Tibial artery (tissue), 4 donors: ENCODE measurements at regions of chr5 and their contacts with region 1.

Region 1: DNA sequence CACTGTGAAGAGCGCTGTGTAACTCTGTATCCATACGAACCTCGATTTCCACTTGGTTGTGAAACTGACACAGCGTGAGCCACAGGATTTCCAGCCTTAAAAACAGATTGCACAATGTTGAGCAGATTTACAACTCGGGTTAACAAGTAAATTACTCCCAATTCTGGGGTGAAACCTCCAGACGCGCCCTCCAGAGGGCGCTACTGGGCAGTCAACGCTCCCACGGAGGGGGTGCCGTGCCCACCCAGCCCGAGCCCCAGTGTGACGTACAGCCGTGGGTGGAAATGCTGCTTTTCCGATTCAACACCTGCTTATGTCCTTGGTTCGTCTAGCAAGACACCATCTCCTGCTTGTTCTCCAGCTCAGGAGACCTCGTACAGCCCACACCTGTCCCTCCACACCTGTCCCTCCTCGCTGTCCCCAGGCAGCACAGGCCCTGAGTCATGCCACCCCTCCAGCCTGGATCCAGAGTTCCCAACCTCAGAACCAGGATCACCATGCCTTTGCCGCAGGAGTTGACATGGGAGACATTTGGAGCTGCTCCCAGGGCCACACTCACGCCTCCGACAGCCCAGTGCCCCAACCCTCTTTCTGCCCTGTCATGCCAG is 34.4 kb upstream of the SLC6A3 start:
- DNase-seq: peak in 1 of 2 donors; percentile 58
- H3K4me3 ChIP-seq: no peak overlapping the region
- H3K27ac ChIP-seq: no peak overlapping the region
- H3K4me1 ChIP-seq: peaks cover 0 to 4% (median 0%) of the 10 kb centered on the region in 4 donors
- H3K27me3 ChIP-seq: no peaks in the 10 kb centered on the region
- CTCF ChIP-seq: peak; percentile 46 to 53

Region 2: DNA sequence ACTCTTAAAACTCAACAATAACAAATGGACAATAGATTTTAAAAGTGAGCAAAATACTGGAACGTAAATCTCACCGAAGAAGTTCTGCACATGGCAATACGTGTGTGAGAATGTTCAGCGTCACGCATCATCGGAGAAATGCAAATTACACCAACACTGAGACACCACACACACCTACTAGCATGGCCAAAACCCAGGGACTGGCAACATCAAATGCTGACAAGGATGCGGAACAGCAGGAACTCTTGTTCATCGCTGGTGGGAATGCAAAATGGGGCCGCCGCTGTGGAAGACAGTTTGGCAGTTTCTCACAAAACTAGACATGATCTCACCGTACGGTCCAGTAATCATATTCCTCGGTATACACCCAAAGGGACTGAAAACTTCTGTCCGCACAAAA is 113.2 kb before region 1 on chr5:
- intact Hi-C with region 1: no loop called
- DNase-seq: no peak
- H3K4me3 ChIP-seq: no peak overlapping the region
- H3K27ac ChIP-seq: no peak overlapping the region
- H3K4me1 ChIP-seq: no peaks in the 10 kb centered on the region
- H3K27me3 ChIP-seq: peaks cover 0 to 22% of the 10 kb centered on the region in 2 donors
- CTCF ChIP-seq: no peak

Region 3: DNA sequence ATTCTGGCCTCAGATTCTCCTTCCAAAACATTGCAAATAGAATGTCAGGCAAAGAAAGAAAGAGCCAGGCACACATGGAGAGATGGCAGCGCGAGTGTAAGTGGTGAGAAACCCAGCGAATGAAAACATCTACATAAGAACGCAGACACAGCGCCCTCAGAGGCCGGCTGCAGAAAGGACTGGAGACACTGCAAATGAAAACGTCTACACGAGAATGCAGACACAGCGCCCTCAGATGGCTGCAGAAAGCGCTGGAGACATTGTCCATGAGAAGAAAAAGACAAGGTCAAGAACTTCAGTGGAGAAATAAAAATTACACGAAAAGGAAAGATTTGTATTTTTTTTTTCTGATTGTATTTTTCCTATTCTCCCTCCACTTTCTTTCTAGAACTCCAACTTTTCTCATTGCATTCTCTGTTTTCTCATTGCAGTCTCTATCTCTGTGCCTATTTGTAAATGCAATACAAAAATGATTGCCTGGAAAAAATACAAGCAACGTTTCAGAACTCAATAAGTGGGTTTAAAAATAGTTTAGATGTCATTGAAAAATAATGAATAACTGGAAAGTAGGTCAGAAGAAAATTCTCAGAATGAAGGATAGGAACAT is 162.0 kb after region 1 on chr5:
- intact Hi-C with region 1: loop called (anchors 5 kb)
- DNase-seq: peak; percentile 85 to 87
- H3K4me3 ChIP-seq: no peak overlapping the region
- H3K27ac ChIP-seq: no peak overlapping the region
- H3K4me1 ChIP-seq: peaks cover 0 to 13% (median 5%) of the 10 kb centered on the region in 4 donors
- H3K27me3 ChIP-seq: peaks cover 0 to 22% of the 10 kb centered on the region in 2 donors
- CTCF ChIP-seq: peak; percentile 67 to 76

Region 4: GRCh38 chr5:1901061-1901460 is 421.4 kb after region 1 on chr5:
- intact Hi-C with region 1: no loop called
- DNase-seq: no peak
- H3K4me3 ChIP-seq: no peak overlapping the region
- H3K27ac ChIP-seq: no peak overlapping the region
- H3K4me1 ChIP-seq: no peaks in the 10 kb centered on the region
- H3K27me3 ChIP-seq: peaks cover 0 to 22% of the 10 kb centered on the region in 2 donors
- CTCF ChIP-seq: no peak

Region 5: GRCh38 chr5:1975898-1976765 is 496.4 kb after region 1 on chr5:
- intact Hi-C with region 1: no loop called
- DNase-seq: no peak
- H3K4me3 ChIP-seq: no peak overlapping the region
- H3K27ac ChIP-seq: no peak overlapping the region
- H3K4me1 ChIP-seq: no peaks in the 10 kb centered on the region
- H3K27me3 ChIP-seq: no peaks in the 10 kb centered on the region
- CTCF ChIP-seq: no peak

Region 6: GRCh38 chr5:3475674-3476073 is 1996.0 kb after region 1 on chr5:
- intact Hi-C with region 1: no loop called
- DNase-seq: no peak
- H3K4me3 ChIP-seq: no peak overlapping the region
- H3K27ac ChIP-seq: no peak overlapping the region
- H3K4me1 ChIP-seq: no peaks in the 10 kb centered on the region
- H3K27me3 ChIP-seq: no peaks in the 10 kb centered on the region
- CTCF ChIP-seq: no peak